Activated CD4-positive, alpha-beta memory T cell treated with anti-CD3 and anti-CD28 coated beads for 36 hours (primary cell): ENCODE measurements at regions of chr11 and their contacts with region 1.

Region 1: GRCh38 chr11:82867495-82868082 is 32.6 kb downstream of the PRCP start:
- DNase-seq: peak; percentile 68
- H3K4me3 Mint-ChIP-seq: no peak overlapping the region
- H3K27ac Mint-ChIP-seq: no peak overlapping the region
- H3K4me1 Mint-ChIP-seq: peaks cover 12% of the 10 kb centered on the region
- H3K27me3 Mint-ChIP-seq: no peaks in the 10 kb centered on the region

Region 2: DNA sequence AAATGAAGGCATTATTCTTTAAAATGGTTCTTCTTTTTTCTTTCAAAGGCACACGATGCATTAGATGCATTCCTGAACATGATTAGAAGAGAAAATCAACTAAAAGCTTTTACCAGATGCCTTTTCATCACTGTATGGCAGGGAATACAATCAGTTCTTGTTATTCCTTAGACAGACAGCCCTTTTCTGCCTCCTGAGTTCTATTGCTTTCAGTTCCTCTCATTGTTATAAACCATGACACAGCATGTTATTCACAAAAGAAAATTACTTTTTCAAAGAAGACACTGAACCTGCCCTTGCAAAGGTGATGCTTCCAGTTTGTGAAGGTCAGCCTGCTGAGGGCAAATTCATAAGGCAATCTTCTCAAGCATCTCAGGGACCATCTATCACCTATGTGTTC is 204.1 kb before region 1 on chr11:
- CTCF ChIA-PET with region 1: no interaction called
- POLR2A ChIA-PET with region 1: no interaction called
- intact Hi-C with region 1: no loop called
- DNase-seq: no peak
- H3K4me3 Mint-ChIP-seq: no peak overlapping the region
- H3K27ac Mint-ChIP-seq: no peak overlapping the region
- H3K4me1 Mint-ChIP-seq: no peaks in the 10 kb centered on the region
- H3K27me3 Mint-ChIP-seq: peaks cover 2% of the 10 kb centered on the region

Region 3: DNA sequence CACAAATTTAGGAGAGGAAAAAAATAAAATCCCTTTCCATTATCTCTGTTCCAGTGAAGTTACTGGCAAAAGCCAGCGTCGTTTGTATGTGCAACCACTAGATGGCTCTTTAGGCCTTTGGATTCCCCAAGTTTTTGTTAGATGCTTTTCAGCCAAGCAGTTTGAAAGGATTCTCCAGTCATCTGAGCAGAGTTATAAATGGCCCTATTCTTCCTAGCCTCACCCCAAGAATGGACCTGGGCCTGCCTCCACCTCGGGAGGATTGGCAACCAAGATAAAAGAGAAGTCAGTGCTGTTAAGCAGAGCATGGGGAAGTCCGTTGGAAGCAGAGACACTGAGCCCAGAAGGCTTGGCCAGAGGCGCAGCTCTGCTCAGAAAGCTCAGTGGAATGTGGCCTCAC is 149.3 kb before region 1 on chr11:
- CTCF ChIA-PET with region 1: interaction called, 5 read pairs
- POLR2A ChIA-PET with region 1: no interaction called
- intact Hi-C with region 1: loop called (anchors 1 kb)
- DNase-seq: no peak
- H3K4me3 Mint-ChIP-seq: no peak overlapping the region
- H3K27ac Mint-ChIP-seq: no peak overlapping the region
- H3K4me1 Mint-ChIP-seq: no peaks in the 10 kb centered on the region
- H3K27me3 Mint-ChIP-seq: no peaks in the 10 kb centered on the region

Region 4: DNA sequence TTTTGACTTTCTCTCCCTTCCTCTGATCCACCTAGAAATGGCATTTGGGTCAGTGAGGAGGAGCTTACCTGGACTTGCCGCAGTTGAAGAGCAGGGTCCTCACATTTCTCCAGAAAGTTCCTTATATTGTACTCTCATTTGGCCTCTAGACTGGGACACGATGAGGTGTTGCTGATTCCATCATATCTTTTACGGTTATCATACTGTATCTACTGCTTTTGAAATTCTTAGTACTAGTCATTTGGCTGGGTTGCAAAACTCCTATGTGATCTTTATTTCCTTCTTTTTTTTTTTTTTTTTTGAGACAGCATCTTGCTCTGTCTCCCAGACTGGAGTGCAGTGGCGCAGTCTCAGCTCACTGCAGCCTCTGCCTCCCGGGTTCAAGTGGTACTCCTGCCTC is 75.3 kb before region 1 on chr11:
- CTCF ChIA-PET with region 1: no interaction called
- POLR2A ChIA-PET with region 1: no interaction called
- intact Hi-C with region 1: no loop called
- DNase-seq: no peak
- H3K4me3 Mint-ChIP-seq: no peak overlapping the region
- H3K27ac Mint-ChIP-seq: no peak overlapping the region
- H3K4me1 Mint-ChIP-seq: no peaks in the 10 kb centered on the region
- H3K27me3 Mint-ChIP-seq: no peaks in the 10 kb centered on the region

Region 5: GRCh38 chr11:82892611-82893169 is 25.1 kb after region 1 on chr11:
- CTCF ChIA-PET with region 1: interaction called, 15 read pairs
- POLR2A ChIA-PET with region 1: no interaction called
- intact Hi-C with region 1: loop called (anchors 1 kb)
- DNase-seq: no peak
- H3K4me3 Mint-ChIP-seq: no peak overlapping the region
- H3K27ac Mint-ChIP-seq: no peak overlapping the region
- H3K4me1 Mint-ChIP-seq: peaks cover 2% of the 10 kb centered on the region
- H3K27me3 Mint-ChIP-seq: no peaks in the 10 kb centered on the region

Region 6: DNA sequence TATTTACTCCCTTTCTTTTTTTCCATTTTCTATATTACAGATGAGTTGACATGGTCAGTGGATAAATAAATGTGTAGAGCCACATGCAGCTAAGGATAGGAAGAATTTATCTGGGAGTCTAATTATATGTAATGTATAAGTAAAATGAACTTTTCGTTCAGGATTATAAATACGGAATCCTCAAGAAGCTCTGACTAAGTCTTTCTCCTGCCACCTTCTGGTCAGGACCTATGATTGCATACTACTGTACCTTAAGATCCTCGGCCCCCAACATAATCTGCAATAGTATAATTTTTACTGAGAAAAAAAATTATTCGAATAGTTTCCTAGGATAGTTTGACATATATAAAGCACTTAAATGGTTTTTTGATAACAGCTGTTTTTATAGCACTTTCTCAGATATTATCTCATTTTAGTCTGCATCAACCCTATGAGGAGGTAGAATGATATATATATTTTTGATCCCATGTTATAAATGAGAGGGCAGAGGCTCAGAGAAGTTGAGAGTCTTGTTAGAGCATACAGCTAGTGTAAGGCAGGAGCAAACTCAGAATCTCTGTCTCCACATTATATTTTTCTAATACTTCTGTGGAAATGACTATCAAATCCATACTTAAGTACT is 382.5 kb after region 1 on chr11:
- CTCF ChIA-PET with region 1: interaction called, 36 read pairs
- POLR2A ChIA-PET with region 1: no interaction called
- intact Hi-C with region 1: loop called (anchors 1 kb)
- DNase-seq: no peak
- H3K4me3 Mint-ChIP-seq: no peak overlapping the region
- H3K27ac Mint-ChIP-seq: no peak overlapping the region
- H3K4me1 Mint-ChIP-seq: no peaks in the 10 kb centered on the region
- H3K27me3 Mint-ChIP-seq: no peaks in the 10 kb centered on the region

Region 7: DNA sequence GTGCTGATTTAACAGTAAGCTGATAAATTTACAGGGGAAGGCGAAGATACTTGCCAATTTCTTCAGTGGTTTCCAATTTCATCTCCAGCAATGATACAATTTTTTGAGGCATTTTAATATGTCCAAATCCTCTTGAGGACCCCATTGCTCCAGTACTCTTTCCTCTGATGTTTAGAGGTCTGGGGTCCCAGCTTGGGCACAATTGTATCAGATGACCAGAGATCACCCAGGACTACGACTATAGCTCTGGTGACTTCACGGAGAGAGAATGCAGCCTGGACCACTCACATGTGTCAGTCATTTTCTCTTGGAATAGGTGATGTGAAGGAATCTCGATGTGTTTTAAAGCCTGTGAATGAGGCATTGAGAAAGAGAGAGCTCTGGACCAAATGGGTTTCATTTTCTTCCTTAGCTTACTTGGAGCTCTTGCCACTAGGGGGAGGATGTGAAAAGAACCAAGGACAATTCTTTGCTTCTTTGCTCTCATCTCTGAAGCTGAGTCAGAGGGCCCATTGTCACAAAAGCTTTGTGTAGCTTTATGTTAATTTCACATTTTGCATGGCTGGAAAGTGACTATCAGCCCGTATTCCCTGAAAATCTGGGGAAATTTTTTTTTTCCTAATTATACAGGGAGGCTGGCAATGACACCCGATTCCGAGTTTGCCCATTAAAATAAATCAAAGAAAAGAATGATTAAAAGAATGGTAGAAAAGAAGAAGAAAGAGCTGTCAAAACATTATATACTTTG is 425.3 kb after region 1 on chr11:
- CTCF ChIA-PET with region 1: interaction called, 12 read pairs
- POLR2A ChIA-PET with region 1: no interaction called
- intact Hi-C with region 1: no loop called
- DNase-seq: no peak
- H3K4me3 Mint-ChIP-seq: peak overlapping the region; percentile 44
- H3K27ac Mint-ChIP-seq: no peak overlapping the region
- H3K4me1 Mint-ChIP-seq: peaks cover 10% of the 10 kb centered on the region
- H3K27me3 Mint-ChIP-seq: no peaks in the 10 kb centered on the region

Region 8: DNA sequence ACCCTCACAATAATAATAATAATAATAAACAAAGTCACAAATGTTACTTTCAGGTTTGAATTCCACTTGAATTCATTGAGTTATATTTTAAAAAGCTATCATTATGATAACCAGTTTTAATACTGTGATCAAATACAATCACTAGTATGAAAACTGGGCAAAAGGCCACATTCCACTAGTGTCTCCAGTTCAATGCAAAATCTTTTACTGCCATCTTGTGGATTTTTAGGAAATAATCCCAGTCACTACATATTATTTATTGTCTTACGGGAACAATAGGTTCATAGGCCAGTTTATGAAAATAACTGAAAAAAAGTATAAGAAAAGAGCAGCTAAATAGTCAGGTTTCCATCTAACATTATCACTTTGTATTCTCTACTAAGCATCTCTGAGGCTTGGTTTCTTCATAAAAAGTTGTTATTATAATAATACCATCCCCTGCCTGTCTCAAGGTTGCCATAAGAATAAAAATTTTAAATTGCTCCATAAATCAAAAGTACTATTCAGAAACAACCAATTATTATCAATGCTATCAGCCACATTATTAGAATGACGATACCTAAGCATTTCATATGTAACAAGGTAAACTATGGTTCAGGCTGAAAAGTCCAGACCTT is 952.5 kb after region 1 on chr11:
- CTCF ChIA-PET with region 1: interaction called, 8 read pairs
- POLR2A ChIA-PET with region 1: no interaction called
- intact Hi-C with region 1: loop called (anchors 1 kb)
- DNase-seq: no peak
- H3K4me3 Mint-ChIP-seq: no peak overlapping the region
- H3K27ac Mint-ChIP-seq: no peak overlapping the region
- H3K4me1 Mint-ChIP-seq: no peaks in the 10 kb centered on the region
- H3K27me3 Mint-ChIP-seq: peaks cover 2% of the 10 kb centered on the region